HEK293T (cell line): ENCODE measurements at regions of chr11 and their contacts with region 1.

Region 1: GRCh38 chr11:95067039-95067840 is 521 bp downstream of the SRSF8 start:
- DNase-seq: peak; percentile 71

Region 2: GRCh38 chr11:95033051-95033450 is 34.2 kb before region 1 on chr11:
- CTCF ChIA-PET with region 1: no interaction called
- POLR2A ChIA-PET with region 1: no interaction called
- DNase-seq: no peak

Region 3: DNA sequence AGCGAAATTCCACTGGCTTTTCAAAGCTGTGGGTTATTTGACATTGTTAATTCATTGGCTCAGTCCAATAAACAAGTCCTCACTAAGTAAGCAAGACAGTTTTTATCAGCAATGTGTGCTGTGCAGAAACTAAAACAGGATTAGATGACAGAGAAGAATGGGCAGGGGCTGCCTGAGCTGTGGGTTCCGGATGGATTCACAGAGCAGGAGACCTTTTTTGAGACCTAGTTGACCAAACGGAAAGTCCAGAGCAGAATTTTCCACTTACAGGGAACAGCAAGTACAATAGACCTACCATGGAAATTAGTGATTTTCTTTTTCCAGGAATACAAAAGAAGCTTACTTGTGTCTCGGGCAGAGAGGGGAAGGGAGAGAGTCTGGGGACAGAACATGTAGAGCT is 23.2 kb before region 1 on chr11:
- CTCF ChIA-PET with region 1: no interaction called
- POLR2A ChIA-PET with region 1: interaction called, 10 read pairs
- DNase-seq: no peak

Region 4: GRCh38 chr11:95081412-95081811 is 14.2 kb after region 1 on chr11:
- CTCF ChIA-PET with region 1: interaction called, 6 read pairs
- POLR2A ChIA-PET with region 1: interaction called, 15 read pairs
- DNase-seq: no peak

Region 5: DNA sequence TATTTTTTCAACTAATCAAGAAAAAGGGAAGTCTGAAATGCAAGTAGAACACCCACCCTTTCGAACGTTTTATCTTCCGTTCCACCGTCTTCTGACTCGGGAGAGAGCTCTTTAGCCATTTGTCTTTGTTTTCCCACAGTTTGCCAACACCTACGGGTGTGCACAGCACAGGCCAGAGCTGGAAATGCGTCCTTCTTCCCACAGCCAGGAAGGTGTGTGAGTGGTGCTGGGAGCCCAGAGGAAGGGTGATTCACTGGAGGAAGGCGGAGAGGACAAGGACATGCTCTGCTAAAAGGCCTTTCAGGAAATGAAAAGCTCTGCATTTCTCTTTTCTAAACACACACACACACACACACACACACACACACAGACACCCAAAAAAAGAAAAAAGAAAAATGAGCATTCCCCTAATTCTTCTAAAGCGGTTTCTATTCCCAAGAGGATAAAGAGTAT is 40.9 kb after region 1 on chr11:
- CTCF ChIA-PET with region 1: interaction called, 3 read pairs
- POLR2A ChIA-PET with region 1: interaction called, 14 read pairs
- DNase-seq: no peak

Region 6: GRCh38 chr11:95150946-95151684 is 83.9 kb after region 1 on chr11:
- CTCF ChIA-PET with region 1: interaction called, 5 read pairs
- POLR2A ChIA-PET with region 1: interaction called, 14 read pairs
- DNase-seq: peak; percentile 85